T-cell (primary cell): ENCODE measurements at regions of chr7 and their contacts with region 1.

Region 1: DNA sequence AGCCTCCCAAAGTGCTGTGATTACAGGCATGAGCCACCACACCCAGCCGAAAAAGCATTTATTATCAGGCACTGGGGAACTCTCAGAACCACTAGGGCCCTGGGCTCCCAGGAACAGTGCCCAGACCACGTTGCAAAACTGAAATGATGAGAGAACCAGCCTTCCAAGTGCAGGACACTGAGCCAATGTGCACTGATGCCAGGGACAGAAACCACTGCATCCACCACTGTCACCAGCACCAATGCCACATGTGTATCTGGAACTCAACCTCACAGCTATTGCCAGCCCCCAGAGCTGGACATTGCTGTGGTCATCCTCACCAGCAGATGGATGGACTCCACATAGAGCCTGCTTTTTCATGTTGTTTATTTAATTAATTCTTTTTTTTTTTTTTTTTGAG is 28.2 kb upstream of the TPST1 start:
- DNase-seq: no peak
- ATAC-seq: no peak
- H3K4me3 ChIP-seq: no peak overlapping the region
- H3K4me3 Mint-ChIP-seq: no peak overlapping the region
- H3K27ac ChIP-seq: no peak overlapping the region
- H3K27ac Mint-ChIP-seq: no peak overlapping the region
- H3K4me1 ChIP-seq: no peaks in the 10 kb centered on the region
- H3K4me1 Mint-ChIP-seq: no peaks in the 10 kb centered on the region
- H3K27me3 ChIP-seq: peaks cover 0 to 2% of the 10 kb centered on the region in 2 experiments
- H3K27me3 Mint-ChIP-seq: no peaks in the 10 kb centered on the region

Region 2: DNA sequence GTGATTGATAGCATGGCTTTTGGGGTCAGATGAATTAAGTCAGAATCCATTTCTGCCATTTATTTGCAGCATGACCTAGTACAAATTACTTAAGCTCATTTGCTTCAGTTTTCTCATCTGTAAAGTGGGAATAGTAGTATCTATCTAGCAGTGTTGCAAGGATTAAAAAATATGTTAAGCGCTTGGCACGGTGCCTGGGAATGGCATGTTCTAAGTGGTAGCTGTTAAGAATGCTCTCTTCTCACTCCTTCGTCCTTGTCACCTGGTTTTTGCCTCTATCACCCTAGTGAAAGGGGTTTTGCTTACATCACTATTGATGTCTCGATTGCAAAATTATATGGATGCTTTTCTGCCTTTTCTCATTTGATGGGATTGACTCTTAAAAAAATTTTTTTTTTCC is 751.5 kb after region 1 on chr7:
- CTCF ChIA-PET with region 1: no interaction called
- POLR2A ChIA-PET with region 1: interaction called in 1 of 2 experiments, 14 read pairs
- DNase-seq: no peak
- ATAC-seq: no peak
- H3K4me3 ChIP-seq: no peak overlapping the region
- H3K4me3 Mint-ChIP-seq: peak overlapping the region in 1 of 3 donors; percentile 37
- H3K27ac ChIP-seq: no peak overlapping the region
- H3K27ac Mint-ChIP-seq: no peak overlapping the region
- H3K4me1 ChIP-seq: peaks cover 2 to 62% of the 10 kb centered on the region in 2 experiments
- H3K4me1 Mint-ChIP-seq: peaks cover 82 to 83% (median 82%) of the 10 kb centered on the region in 3 donors
- H3K27me3 ChIP-seq: no peaks in the 10 kb centered on the region
- H3K27me3 Mint-ChIP-seq: no peaks in the 10 kb centered on the region